A673 (cell line): ENCODE measurements at regions of chr14 and their contacts with region 1.

Region 1: DNA sequence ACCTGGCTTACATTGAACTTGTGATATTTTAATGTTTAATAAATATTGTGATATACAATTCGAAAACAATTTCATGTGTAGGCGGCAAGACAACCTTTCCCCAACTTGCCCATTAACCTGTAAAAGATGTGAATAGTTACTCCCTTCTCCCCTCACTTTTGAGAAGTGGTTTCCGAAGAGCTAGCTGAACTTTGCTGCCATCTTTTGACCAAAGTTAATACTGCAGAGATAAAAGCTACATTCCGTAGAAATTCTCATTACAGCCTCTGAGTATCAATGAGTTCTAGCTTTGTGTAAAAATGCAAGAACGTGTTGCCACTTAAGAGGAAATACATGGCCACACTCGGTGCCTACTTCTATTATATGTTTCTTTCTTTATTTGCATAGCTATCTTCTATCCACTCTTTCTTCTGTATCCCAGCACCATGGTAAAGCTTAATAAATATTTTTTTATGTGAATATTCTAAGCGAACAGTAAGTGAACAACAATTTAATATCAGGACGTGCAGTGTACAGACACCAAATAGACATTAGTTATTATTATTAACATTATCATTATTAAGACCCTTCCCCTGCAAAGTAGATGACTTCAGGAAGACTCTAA is 105.1 kb upstream of the TMEM260 start:
- DNase-seq: peak; percentile 74
- H3K4me3 ChIP-seq: no peak overlapping the region
- H3K27ac ChIP-seq: no peak overlapping the region
- H3K4me1 ChIP-seq: no peaks in the 10 kb centered on the region
- H3K27me3 ChIP-seq: no peaks in the 10 kb centered on the region
- CTCF ChIP-seq: peak; percentile 87

Region 2: DNA sequence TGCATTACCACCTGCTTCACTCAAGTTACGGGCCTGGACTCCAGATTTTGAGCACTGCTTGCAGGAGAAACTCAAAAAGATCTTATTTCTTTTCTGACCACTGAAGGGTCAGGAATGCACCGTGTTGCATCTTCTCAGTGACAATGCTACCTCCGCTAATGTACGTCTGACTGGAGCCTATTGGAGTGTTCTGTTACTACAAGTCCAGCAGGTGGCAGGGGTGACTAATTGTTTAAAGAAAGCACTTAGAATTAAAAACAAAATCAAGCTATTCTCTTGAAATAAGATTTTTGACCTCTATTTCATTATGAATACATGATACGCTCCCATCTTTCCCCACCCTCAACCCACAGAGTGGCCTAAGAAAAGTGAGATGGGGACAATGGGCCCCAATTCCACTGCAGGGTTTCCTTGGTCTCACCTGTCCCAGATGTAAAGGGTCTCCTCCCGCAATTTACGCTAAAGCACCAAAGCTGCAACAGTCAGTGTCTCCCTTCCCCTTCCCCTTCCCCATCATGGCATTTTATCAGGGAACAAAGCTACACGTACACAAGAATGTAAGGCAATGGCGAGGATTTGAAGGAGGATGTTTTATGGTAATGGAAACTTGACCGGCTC is 1036.3 kb before region 1 on chr14:
- CTCF ChIA-PET with region 1: interaction called, 9 read pairs
- POLR2A ChIA-PET with region 1: no interaction called
- intact Hi-C with region 1: loop called (anchors 5 kb)
- DNase-seq: peak; percentile 77
- H3K4me3 ChIP-seq: no peak overlapping the region
- H3K27ac ChIP-seq: no peak overlapping the region
- H3K4me1 ChIP-seq: no peaks in the 10 kb centered on the region
- H3K27me3 ChIP-seq: no peaks in the 10 kb centered on the region
- CTCF ChIP-seq: peak; percentile 65

Region 3: GRCh38 chr14:55707365-55707804 is 767.1 kb before region 1 on chr14:
- CTCF ChIA-PET with region 1: interaction called, 3 read pairs
- POLR2A ChIA-PET with region 1: no interaction called
- intact Hi-C with region 1: loop called (anchors 2 kb)
- DNase-seq: peak; percentile 71
- H3K4me3 ChIP-seq: no peak overlapping the region
- H3K27ac ChIP-seq: no peak overlapping the region
- H3K4me1 ChIP-seq: peaks cover 6% of the 10 kb centered on the region
- H3K27me3 ChIP-seq: no peaks in the 10 kb centered on the region
- CTCF ChIP-seq: peak; percentile 74

Region 4: GRCh38 chr14:55731881-55732498 is 742.5 kb before region 1 on chr14:
- CTCF ChIA-PET with region 1: interaction called, 10 read pairs
- POLR2A ChIA-PET with region 1: no interaction called
- intact Hi-C with region 1: loop called (anchors 5 kb)
- DNase-seq: peak; percentile 63
- H3K4me3 ChIP-seq: no peak overlapping the region
- H3K27ac ChIP-seq: no peak overlapping the region
- H3K4me1 ChIP-seq: no peaks in the 10 kb centered on the region
- H3K27me3 ChIP-seq: no peaks in the 10 kb centered on the region
- CTCF ChIP-seq: peak; percentile 87

Region 5: DNA sequence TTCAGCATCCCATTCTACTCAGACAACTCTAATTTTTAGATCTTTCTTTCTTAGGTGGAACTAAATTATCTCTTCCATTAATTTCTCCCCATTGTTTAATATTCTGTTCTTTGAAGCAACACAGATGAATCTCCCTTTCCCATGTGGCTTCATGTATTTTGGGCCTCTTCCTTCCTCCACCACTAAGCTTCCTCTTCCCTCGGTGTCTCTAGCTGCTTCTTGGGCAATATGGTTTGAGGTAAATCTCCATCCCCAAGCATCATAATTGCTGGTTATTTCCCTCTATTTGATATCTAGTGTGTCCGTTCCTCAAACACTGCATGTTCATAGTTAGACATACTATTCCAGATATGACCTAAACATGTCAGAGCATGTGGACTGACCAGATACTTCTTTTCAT is 237.1 kb before region 1 on chr14:
- CTCF ChIA-PET with region 1: no interaction called
- POLR2A ChIA-PET with region 1: no interaction called
- intact Hi-C with region 1: loop called (anchors 5 kb)
- DNase-seq: no peak
- H3K4me3 ChIP-seq: no peak overlapping the region
- H3K27ac ChIP-seq: no peak overlapping the region
- H3K4me1 ChIP-seq: no peaks in the 10 kb centered on the region
- H3K27me3 ChIP-seq: no peaks in the 10 kb centered on the region
- CTCF ChIP-seq: no peak